CD8-positive, alpha-beta T cell (primary cell): ENCODE measurements at regions of chr3 and their contacts with region 1.

Region 1: DNA sequence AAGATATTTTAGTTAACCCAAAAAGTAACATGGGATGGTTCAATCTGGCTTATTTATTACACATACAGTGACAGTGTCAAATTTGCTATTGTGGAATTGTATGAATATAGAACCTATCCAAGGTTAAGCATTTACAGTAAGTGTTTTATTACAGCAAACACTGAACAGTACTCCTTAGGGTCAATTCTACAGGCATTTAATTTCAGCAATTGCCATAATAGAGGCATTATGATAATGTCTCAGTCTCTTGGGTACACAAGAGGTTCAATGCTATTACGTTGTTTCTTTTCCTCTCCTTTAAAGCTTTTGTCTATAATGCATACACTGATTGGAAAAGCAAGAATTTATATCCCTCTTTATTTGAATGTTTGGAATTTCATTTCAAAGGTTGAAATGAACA is 275.7 kb upstream of the NAALADL2 start:
- DNase-seq: no peak
- ATAC-seq: no peak
- H3K4me3 ChIP-seq: no peak overlapping the region
- H3K4me3 Mint-ChIP-seq: no peak overlapping the region
- H3K27ac ChIP-seq: no peak overlapping the region
- H3K27ac Mint-ChIP-seq: no peak overlapping the region
- H3K4me1 ChIP-seq: no peaks in the 10 kb centered on the region
- H3K4me1 Mint-ChIP-seq: no peaks in the 10 kb centered on the region
- H3K27me3 ChIP-seq: no peaks in the 10 kb centered on the region
- H3K27me3 Mint-ChIP-seq: no peaks in the 10 kb centered on the region
- CTCF ChIP-seq: no peak

Region 2: GRCh38 chr3:174440741-174441587 is 142.4 kb before region 1 on chr3:
- CTCF ChIA-PET with region 1: no interaction called
- POLR2A ChIA-PET with region 1: no interaction called
- intact Hi-C with region 1: no loop called
- DNase-seq: peak; percentile 3 to 80 (median 48)
- ATAC-seq: peak; percentile 75
- H3K4me3 ChIP-seq: peak overlapping the region; percentile 46 to 77
- H3K4me3 Mint-ChIP-seq: peak overlapping the region; percentile 83
- H3K27ac ChIP-seq: peak overlapping the region; percentile 41 to 66
- H3K27ac Mint-ChIP-seq: peak overlapping the region; percentile 73
- H3K4me1 ChIP-seq: peaks cover 8% of the 10 kb centered on the region
- H3K4me1 Mint-ChIP-seq: peaks cover 15% of the 10 kb centered on the region
- H3K27me3 ChIP-seq: no peaks in the 10 kb centered on the region
- H3K27me3 Mint-ChIP-seq: peaks cover 12% of the 10 kb centered on the region
- CTCF ChIP-seq: no peak

Region 3: GRCh38 chr3:174662653-174663052 is 79.3 kb after region 1 on chr3:
- CTCF ChIA-PET with region 1: no interaction called
- POLR2A ChIA-PET with region 1: no interaction called
- intact Hi-C with region 1: loop called in 1 of 2 experiments (anchors 2 kb)
- DNase-seq: no peak
- ATAC-seq: no peak
- H3K4me3 ChIP-seq: no peak overlapping the region
- H3K4me3 Mint-ChIP-seq: no peak overlapping the region
- H3K27ac ChIP-seq: no peak overlapping the region
- H3K27ac Mint-ChIP-seq: no peak overlapping the region
- H3K4me1 ChIP-seq: no peaks in the 10 kb centered on the region
- H3K4me1 Mint-ChIP-seq: no peaks in the 10 kb centered on the region
- H3K27me3 ChIP-seq: no peaks in the 10 kb centered on the region
- H3K27me3 Mint-ChIP-seq: no peaks in the 10 kb centered on the region
- CTCF ChIP-seq: no peak